Left ventricle myocardium superior (tissue), 1 donor: ENCODE measurements at regions of chr2 and their contacts with region 1.

Region 1: GRCh38 chr2:237572021-237572741 is 5.8 kb downstream of the PRLH start:
- DNase-seq: peak; percentile 94
- ATAC-seq: peak; percentile 93

Region 2: DNA sequence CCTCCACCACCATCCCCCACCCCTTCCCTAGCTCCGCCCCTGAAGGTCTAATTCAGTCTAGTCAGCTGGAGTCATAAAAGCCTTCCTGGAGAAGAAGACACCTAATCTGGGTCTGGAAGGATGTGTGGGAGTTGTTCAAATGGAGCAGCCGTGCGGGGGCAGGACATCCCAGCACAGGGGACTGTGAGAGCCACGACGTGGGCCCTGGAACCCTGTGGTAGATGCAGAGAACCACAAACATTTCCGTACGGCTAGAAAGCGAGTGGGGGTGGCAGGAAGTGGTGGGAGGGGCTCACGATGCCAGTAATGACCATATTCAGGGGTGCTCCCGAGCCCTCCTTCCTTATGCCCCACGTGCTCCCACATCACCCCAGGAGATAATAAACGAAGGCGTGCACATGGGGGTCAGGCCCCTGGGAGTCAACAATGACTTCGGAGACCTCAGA is 137.3 kb before region 1 on chr2:
- intact Hi-C with region 1: no loop called
- DNase-seq: no peak
- ATAC-seq: peak; percentile 6

Region 3: GRCh38 chr2:237500681-237501424 is 71.3 kb before region 1 on chr2:
- intact Hi-C with region 1: no loop called
- DNase-seq: no peak
- ATAC-seq: peak; percentile 7

Region 4: DNA sequence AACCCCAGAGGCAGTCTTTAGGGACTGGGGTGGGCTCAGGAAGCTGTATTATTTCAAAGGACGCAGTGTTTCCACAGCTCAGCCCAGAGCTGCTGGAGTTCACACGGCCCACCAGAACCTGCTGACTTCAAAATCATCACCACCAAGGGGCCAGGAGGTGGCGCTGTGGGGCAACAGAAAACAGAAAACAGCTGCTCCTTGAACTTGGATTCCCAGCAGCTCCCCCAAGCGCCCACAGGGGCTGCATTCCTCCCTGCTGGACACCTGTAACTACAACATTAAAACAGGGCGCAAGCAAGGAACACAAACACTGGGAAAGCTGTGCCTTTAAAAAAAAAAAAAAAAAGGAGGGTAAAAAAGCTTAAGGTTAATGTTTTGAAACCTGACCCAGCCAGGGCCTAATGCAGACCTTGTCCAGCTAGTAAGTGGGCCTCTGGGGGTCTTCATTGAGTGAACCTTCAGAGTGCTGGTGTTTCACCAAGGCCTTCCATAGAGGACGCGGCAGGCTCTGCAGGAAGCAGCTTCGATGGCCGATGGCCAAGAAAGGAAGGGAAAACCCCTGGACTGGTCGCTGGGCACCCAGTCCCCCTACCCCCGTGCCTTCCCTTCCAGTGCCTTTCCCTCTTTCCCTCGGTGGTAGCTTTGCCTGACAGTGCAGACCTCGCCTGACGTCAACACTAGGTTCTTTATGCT is 59.3 kb before region 1 on chr2:
- intact Hi-C with region 1: loop called (anchors 10 kb)
- DNase-seq: peak; percentile 92
- ATAC-seq: peak; percentile 61